Heart right ventricle (tissue), 16 donors: ENCODE measurements at regions of chr4 and their contacts with region 1.

Region 1: DNA sequence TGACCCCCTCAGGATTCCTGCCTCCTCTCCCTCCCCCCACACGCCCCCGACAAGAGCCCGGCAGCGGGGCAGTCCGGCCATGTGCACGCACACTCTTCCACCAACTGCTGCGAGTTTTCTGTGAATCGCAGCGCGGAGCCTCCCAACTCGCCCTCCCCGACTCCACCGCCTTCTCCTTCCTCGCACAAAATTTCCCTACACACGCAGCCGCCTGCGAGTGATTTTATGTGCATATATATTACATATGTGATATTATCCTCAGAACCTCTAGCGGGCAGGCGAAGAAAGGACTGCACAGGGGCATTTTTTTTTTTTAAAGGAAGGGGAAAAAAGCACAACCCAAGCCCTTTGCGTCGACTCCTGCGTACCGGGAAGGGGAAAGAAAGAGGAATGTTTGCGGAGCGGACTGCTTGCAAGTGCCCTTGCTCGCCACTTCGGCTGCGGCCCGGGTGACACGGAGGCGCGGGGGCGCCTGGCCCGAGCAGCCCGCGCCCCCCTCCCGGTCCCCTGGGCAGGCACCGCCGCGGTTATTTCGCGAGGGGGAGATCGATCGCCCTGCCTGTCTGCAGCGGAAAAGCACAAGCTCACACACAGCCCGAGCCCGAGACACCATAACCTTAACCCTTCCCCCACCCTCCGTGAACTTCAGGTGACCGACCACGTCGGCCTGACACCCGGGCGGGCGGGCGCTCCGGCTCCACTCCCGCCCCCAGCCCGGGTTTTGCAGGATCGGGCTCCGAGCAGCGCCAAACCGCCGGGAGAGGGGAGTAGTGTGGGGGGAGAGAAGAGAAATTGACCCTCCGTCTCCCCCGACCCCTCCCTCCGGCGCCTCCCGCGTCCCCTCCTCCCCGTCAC is 2.3 kb downstream of the ZNF827 start:
- DNase-seq: peak; percentile 70 to 76
- ATAC-seq: peak; percentile 65 to 87 (median 73)
- H3K4me3 ChIP-seq: peak overlapping the region; percentile 68 to 88 (median 82)
- H3K27ac ChIP-seq: peak overlapping the region; percentile 84 to 98 (median 96)
- H3K4me1 ChIP-seq: peaks cover 0 to 31% (median 12%) of the 10 kb centered on the region in 9 donors
- H3K27me3 ChIP-seq: peaks cover 0 to 17% (median 0%) of the 10 kb centered on the region in 7 donors
- CTCF ChIP-seq: peak in 4 of 9 donors; percentile 19 to 35 (median 26)

Region 2: DNA sequence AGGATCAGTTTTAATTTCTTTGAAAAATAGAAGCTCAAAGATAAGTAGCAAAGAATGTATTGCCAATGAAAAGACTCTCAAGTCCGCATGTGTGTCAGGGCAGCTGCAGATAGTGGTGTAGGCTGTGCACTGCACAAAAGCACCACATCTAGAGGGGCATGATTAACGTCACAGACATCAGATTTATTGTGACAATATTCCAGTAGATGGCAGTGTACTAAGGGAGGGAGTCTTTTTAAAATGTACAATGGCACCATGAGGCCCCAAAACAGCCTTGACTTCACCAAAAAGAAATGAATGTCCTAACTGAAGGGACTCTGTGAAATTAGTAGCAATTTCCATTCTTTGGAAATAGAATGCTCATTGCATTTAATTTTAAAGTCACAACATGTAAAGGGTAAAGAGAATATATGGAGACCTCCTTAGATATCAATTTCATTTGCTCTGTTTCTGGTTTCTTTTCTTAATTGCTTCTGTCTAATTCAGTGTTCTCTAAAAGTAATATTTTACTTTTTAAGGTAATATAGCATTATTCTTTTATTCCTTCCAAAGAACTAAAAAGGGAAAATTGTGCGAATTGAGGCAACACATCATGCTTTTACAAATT is 96.1 kb before region 1 on chr4:
- intact Hi-C with region 1: loop called in 2 of 10 experiments (anchors 5 to 10 kb)
- DNase-seq: no peak
- ATAC-seq: peak in 5 of 8 donors; percentile 55 to 82 (median 73)
- H3K4me3 ChIP-seq: no peak overlapping the region
- H3K27ac ChIP-seq: no peak overlapping the region
- H3K4me1 ChIP-seq: peaks cover 0 to 21% (median 6%) of the 10 kb centered on the region in 9 donors
- H3K27me3 ChIP-seq: no peaks in the 10 kb centered on the region
- CTCF ChIP-seq: peak; percentile 10 to 70 (median 56)

Region 3: GRCh38 chr4:145887241-145887991 is 49.0 kb before region 1 on chr4:
- intact Hi-C with region 1: loop called in 3 of 10 experiments (anchors 5 to 10 kb)
- DNase-seq: peak in 1 of 2 donors; percentile 26
- ATAC-seq: peak; percentile 51 to 76 (median 72)
- H3K4me3 ChIP-seq: peak overlapping the region in 2 of 10 donors; percentile 5 to 18
- H3K27ac ChIP-seq: peak overlapping the region in 9 of 10 donors; percentile 8 to 78 (median 59)
- H3K4me1 ChIP-seq: peaks cover 5 to 29% (median 24%) of the 10 kb centered on the region in 9 donors
- H3K27me3 ChIP-seq: no peaks in the 10 kb centered on the region
- CTCF ChIP-seq: peak in 5 of 9 donors; percentile 20 to 56 (median 44)